ENCODE measurements at regions of chr14 and their contacts with region 1.

Region 1: DNA sequence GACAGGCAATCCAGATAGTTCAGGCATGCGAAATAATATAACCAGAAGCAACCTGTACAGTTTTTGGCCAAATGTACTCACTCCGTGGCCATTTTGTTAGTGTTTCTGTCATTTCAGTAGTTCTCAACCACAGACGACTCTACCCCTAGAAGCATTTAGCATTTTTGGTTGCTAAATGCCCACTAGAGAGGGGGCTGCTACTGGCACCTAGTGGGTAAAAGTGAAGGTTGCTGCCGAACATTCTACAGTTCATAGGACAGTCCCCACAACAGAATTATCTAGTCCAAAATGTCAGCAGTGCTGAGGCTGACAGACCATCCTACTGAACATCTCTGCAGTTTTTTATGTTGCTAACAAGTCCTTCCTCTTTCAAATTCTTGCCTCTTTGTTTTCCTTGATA is 107.4 kb downstream of the TSHR start:
- DNase-seq: peak; percentile 7 to 50
- H3K4me3 ChIP-seq: no peak overlapping the region
- H3K27ac ChIP-seq: no peak overlapping the region
- H3K4me1 ChIP-seq: no peaks in the 10 kb centered on the region
- H3K27me3 ChIP-seq: no peaks in the 10 kb centered on the region
- CTCF ChIP-seq: peak; percentile 11 to 80 (median 77)
- EP300 ChIP-seq: no peak
- POLR2A ChIP-seq: no peak
- RAD21 ChIP-seq: peak; percentile 78 to 84

Region 2: GRCh38 chr14:80954687-80955299 is 108.0 kb before region 1 on chr14:
- CTCF ChIA-PET with region 1: interaction called, 10 read pairs
- POLR2A ChIA-PET with region 1: no interaction called
- DNase-seq: peak; percentile 38 to 89
- H3K4me3 ChIP-seq: peak overlapping the region; percentile 18 to 77 (median 64); a peak in 7 of 8 replicates
- H3K27ac ChIP-seq: no peak overlapping the region
- H3K4me1 ChIP-seq: peaks cover 0 to 6% (median under 1%) of the 10 kb centered on the region in 4 experiments; a peak in 2 of 7 replicates
- H3K27me3 ChIP-seq: peaks cover 2 to 9% (median 6%) of the 10 kb centered on the region in 4 experiments; a peak in 5 of 7 replicates
- CTCF ChIP-seq: peak; percentile 53 to 84 (median 69)
- EP300 ChIP-seq: no peak
- POLR2A ChIP-seq: no peak
- RAD21 ChIP-seq: peak; percentile 85 to 93

Region 3: DNA sequence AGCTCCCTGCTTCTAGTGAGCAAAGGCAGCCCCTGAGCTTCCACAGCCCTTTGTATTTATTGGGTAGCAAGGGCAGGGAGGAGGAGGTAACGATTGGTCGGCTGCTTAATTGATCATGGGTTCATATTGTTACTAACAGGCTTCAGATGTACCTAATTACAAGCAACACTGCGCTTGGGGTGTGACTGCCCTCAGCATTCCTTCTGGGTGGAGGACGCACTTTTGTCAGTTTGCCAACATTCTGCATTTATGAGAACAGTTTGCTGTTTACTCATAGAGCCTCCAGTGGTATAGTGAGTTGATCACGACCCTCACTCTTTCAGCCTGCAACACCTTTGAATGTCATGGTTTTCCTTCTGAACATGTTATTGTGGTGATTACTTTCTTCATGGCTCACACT is 97.8 kb before region 1 on chr14:
- CTCF ChIA-PET with region 1: no interaction called
- POLR2A ChIA-PET with region 1: no interaction called
- DNase-seq: no peak
- H3K4me3 ChIP-seq: no peak overlapping the region
- H3K27ac ChIP-seq: no peak overlapping the region
- H3K4me1 ChIP-seq: no peaks in the 10 kb centered on the region
- H3K27me3 ChIP-seq: no peaks in the 10 kb centered on the region
- CTCF ChIP-seq: no peak
- EP300 ChIP-seq: no peak
- POLR2A ChIP-seq: no peak
- RAD21 ChIP-seq: no peak

Measured in H1 (cell line).